Activated CD4-positive, alpha-beta T cell treated with anti-CD3 and anti-CD28 coated beads for 36 hours (primary cell): ENCODE measurements at regions of chr2 and their contacts with region 1.

Region 1: GRCh38 chr2:188512456-188512855 is 220.8 kb downstream of the GULP1 start:
- DNase-seq: no peak
- ATAC-seq: peak; percentile 30
- H3K4me3 Mint-ChIP-seq: no peak overlapping the region
- H3K27ac Mint-ChIP-seq: no peak overlapping the region
- H3K4me1 Mint-ChIP-seq: no peaks in the 10 kb centered on the region
- H3K27me3 Mint-ChIP-seq: no peaks in the 10 kb centered on the region

Region 2: DNA sequence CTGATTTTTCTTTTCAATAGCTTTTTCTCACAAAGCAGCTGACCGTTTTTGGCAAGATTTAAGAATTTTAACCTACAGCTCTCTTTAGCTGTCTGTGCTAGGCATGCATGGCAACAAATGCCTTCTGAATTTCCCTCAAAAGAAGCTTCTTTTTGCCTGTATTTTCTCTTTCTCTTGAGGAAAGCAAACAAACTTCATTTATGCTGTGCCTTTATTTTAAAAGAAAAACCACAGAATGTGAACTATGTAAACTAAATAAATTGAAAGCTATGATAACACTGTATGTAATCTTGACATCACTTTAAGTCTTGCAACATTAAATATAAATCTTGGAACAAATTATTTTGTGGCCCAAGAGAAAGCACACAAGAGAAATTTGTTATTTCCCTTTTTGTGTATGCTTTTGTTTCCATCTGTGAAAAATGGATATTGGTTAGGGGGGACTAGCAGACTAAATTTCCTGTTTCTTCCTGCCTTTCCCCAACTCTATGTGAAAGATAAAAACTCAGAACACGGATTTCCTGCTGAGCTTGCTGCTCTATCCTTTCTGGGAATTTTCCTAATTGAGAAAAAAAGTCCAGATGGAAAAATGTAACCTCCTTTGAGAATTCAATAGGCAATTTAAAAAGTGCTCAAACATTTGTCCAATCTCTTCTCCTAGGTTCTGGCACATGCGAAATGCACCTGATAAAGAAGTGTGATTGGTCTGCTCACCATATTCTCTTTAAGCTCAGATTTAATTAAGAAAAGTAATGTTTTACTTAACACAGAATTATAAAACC is 937.3 kb before region 1 on chr2:
- CTCF ChIA-PET with region 1: no interaction called
- POLR2A ChIA-PET with region 1: no interaction called
- intact Hi-C with region 1: loop called (anchors 5 to 10 kb)
- DNase-seq: no peak
- ATAC-seq: no peak
- H3K4me3 Mint-ChIP-seq: no peak overlapping the region
- H3K27ac Mint-ChIP-seq: no peak overlapping the region
- H3K4me1 Mint-ChIP-seq: no peaks in the 10 kb centered on the region
- H3K27me3 Mint-ChIP-seq: no peaks in the 10 kb centered on the region

Region 3: GRCh38 chr2:188573453-188573852 is 61.0 kb after region 1 on chr2:
- CTCF ChIA-PET with region 1: no interaction called
- POLR2A ChIA-PET with region 1: no interaction called
- intact Hi-C with region 1: no loop called
- DNase-seq: no peak
- ATAC-seq: no peak
- H3K4me3 Mint-ChIP-seq: no peak overlapping the region
- H3K27ac Mint-ChIP-seq: no peak overlapping the region
- H3K4me1 Mint-ChIP-seq: no peaks in the 10 kb centered on the region
- H3K27me3 Mint-ChIP-seq: no peaks in the 10 kb centered on the region

Region 4: DNA sequence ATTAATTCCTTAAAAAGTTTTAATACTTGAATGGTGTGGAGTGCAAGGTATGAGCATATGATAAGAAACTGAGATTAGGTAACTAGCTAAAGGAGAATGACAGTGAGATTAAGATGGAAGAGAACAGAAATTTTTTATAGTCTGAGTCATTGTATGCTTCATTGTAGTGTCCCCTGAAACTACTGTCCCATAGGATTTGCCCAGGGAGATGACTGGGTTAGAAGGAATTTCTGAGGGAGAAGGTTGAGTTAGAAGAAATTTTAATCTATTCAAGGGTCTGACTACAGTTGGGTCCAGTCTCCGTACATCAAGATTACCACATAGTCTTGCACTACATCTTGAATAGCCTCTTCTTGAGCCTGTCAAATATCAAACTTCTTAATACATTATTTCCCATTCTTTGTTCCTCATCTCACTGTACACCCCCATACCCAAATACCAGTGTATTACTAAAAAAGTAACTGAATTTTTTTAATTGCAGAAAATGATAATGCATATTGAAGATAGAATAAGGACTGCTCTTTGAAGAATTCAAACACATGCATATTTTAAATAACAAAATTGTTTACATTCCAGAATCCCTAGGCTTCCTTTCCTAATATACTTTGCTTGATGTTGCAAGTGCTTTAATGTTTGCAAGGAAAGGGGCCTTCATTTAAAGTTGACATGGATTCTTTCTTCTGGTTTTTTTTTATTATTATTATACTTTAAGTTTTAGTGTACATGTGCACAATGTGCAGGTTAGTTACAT is 147.4 kb after region 1 on chr2:
- CTCF ChIA-PET with region 1: no interaction called
- POLR2A ChIA-PET with region 1: no interaction called
- intact Hi-C with region 1: no loop called
- DNase-seq: no peak
- ATAC-seq: no peak
- H3K4me3 Mint-ChIP-seq: no peak overlapping the region
- H3K27ac Mint-ChIP-seq: no peak overlapping the region
- H3K4me1 Mint-ChIP-seq: no peaks in the 10 kb centered on the region
- H3K27me3 Mint-ChIP-seq: no peaks in the 10 kb centered on the region